ENCODE measurements at regions of chr15 and their contacts with region 1.

Region 1: DNA sequence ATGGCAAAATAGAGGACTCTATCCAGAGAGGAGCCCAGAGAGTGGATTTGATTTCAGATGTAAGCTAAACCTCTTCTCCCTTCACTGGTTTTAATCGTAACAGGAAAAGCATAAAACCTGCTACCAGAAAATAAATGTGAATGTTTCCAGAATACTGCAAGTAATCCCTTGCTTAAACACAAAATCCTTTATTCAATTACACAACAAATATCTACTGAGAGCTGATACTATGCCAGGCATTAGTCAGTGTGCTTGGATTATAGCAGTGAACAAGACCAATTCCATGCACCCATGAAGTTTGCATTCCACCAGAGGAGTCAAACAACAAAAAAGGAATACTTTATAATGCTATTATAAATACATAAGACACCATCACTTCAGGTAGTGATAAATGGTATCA is 15.1 kb downstream of the AVEN start:
- DNase-seq: no peak
- H3K4me3 ChIP-seq: no peak overlapping the region
- H3K27ac ChIP-seq: no peak overlapping the region
- H3K4me1 ChIP-seq: no peaks in the 10 kb centered on the region
- CTCF ChIP-seq: no peak

Region 2: DNA sequence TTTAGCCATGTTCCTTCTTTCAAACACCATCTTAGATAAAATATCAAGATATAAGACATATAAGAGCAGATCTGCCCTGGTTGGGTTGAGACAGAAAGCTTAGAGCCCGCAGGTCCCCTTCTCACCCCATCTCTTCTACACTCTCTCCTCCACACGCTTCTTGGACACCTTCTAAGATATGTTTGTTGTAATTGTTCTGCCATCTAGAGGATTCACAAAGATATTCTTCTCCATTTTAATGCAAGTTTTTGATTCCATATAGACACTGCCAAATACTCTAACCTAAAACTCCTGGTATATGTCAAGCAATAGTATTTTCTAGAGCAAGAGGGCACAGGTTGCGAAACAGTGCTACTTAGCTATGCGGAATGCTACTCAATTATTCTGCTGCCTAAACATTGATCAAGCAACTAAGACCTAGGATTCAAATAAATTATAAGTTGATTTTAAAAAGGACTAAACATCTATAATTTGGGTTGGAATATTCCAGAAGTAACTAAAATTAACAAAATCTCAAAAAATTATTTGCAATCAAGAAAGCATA is 48.8 kb before region 1 on chr15:
- CTCF ChIA-PET with region 1: no interaction called
- POLR2A ChIA-PET with region 1: no interaction called
- intact Hi-C with region 1: no loop called
- DNase-seq: peak; percentile 1
- H3K4me3 ChIP-seq: no peak overlapping the region
- H3K27ac ChIP-seq: no peak overlapping the region
- H3K4me1 ChIP-seq: no peaks in the 10 kb centered on the region
- CTCF ChIP-seq: peak; percentile 44

Region 3: GRCh38 chr15:34012461-34013028 is 11.4 kb before region 1 on chr15:
- CTCF ChIA-PET with region 1: no interaction called
- POLR2A ChIA-PET with region 1: no interaction called
- intact Hi-C with region 1: loop called (anchors 1 kb)
- DNase-seq: no peak
- H3K4me3 ChIP-seq: no peak overlapping the region
- H3K27ac ChIP-seq: no peak overlapping the region
- H3K4me1 ChIP-seq: no peaks in the 10 kb centered on the region
- CTCF ChIP-seq: no peak